Psoas muscle (tissue), 8 donors: ENCODE measurements at regions of chr6 and their contacts with region 1.

Region 1: DNA sequence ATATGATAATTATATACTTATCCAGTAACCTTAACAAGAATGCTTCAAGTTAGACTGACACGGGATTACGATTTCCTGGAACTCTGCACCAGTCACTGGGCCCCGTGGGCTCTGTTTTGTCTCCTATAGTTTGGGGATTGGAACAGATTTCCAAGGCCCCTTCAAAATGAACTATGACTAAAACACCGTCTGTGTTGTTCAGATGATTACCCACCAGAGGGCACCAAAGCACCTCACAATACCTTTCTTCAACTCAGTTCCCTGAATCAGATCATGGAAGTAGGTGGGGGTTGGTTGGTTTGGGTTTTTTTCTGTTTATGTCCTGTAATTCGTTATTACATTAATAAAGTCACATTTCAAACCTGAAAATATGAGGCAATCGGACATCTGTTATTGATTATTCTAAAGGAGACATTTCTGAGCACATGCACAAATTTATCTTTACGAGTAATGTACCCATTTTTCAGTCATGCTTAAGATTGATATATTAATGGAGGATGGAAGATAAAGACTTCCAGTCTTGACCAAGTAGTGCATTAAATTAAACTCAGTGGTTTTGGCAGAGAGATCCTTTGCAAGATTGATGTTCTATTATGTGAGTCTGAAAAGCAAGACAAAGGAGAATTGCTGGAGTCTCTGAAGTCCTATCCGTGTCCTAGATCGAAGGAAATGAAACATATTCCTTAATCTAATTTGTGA is 112.0 kb upstream of the COL21A1 start:
- DNase-seq: peak in 1 of 2 donors; percentile 28
- ATAC-seq: peak; percentile 73 to 92 (median 82)
- H3K4me3 ChIP-seq: no peak overlapping the region
- H3K27ac ChIP-seq: no peak overlapping the region
- H3K4me1 ChIP-seq: no peaks in the 10 kb centered on the region
- H3K27me3 ChIP-seq: no peaks in the 10 kb centered on the region
- CTCF ChIP-seq: peak; percentile 82

Region 2: DNA sequence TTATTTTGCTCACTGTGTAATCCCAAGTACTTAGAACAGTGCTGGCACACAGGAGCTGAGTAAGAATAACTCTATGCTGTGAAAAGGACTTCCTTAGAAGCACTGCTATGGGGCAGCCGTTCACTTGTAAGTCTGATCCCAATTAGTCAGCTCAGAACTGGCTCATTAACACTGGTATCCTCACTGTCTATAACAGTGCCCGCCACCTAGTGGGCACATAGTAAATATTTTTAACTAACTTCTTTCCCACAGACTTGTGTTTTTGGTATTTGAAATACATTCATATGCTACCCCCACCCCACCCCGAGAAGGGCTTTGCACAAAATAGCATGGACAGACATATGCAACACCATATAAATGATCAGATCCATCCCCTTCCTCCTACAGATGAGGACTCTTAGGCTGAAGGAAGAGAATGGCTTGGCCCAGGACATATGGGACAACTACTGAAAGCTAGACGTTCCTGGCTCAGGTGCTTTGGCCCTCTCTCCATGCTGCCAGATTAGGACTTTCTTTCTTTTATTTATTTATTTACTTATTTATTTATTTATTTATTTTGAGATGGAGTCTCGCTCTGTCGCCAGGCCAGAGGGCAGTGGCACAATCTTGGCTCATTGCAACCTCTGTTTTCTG is 236.3 kb after region 1 on chr6:
- intact Hi-C with region 1: loop called (anchors 2 kb)
- DNase-seq: no peak
- ATAC-seq: peak in 3 of 4 donors; percentile 57 to 76 (median 65)
- H3K4me3 ChIP-seq: no peak overlapping the region
- H3K27ac ChIP-seq: no peak overlapping the region
- H3K4me1 ChIP-seq: no peaks in the 10 kb centered on the region
- H3K27me3 ChIP-seq: no peaks in the 10 kb centered on the region
- CTCF ChIP-seq: peak; percentile 54